ENCODE measurements at regions of chr10 and their contacts with region 1.

Region 1: DNA sequence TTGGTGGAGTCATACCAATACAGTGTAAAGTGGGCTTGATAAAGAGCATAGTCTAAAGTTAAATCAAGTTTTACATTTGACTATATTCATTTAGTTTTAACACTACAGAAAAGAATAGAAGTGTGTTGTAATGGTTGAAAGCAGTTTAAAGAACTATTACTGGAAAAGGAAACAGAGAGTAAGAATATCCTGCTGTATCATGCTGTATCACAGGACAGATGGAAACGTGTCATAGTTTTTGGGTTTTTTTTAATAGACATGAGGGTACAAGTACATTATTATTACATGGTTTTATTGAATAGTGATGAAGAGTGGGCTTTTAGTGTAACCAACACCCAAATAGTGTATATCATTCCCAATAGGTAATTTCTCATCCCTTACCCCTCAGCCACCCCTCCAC is 944.3 kb downstream of the LRMDA start:
- DNase-seq: no peak
- ATAC-seq: no peak
- H3K4me3 ChIP-seq: no peak overlapping the region
- H3K4me3 Mint-ChIP-seq: no peak overlapping the region
- H3K27ac ChIP-seq: no peak overlapping the region
- H3K27ac Mint-ChIP-seq: no peak overlapping the region
- H3K4me1 ChIP-seq: no peaks in the 10 kb centered on the region
- H3K4me1 Mint-ChIP-seq: no peaks in the 10 kb centered on the region
- H3K27me3 ChIP-seq: no peaks in the 10 kb centered on the region
- H3K27me3 Mint-ChIP-seq: no peaks in the 10 kb centered on the region
- CTCF ChIP-seq: no peak

Region 2: DNA sequence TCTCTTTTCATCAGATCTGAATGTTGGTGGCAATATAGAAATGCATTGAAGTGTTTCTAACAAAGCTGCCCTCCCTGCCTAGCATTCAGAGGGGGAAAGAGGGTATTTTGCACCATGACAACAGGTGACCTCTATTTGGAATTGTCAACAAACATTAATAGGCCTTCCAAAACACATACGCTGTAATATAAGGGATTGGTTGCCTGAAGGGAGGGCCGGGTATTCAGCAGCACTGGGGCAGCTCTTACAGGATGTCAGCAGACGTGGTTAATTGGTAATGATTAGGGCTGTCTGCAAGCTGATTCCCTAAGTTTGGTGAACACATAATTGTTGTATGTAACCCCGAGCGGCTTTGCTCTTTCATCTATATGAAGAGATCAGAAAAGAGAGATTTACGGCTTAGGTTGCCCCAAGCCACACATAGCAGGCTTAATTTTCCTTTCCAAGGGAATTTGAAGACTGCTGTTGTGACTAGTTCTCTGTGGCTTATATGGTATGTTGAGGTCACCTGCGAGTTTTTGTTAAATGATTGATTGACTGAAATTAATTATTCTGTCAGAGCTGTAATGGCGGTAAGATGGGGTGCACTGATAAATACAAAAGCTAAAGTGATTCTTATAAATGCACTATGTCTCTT is 185.0 kb before region 1 on chr10:
- CTCF ChIA-PET with region 1: no interaction called
- POLR2A ChIA-PET with region 1: no interaction called
- intact Hi-C with region 1: no loop called
- DNase-seq: no peak
- ATAC-seq: no peak
- H3K4me3 ChIP-seq: no peak overlapping the region
- H3K4me3 Mint-ChIP-seq: no peak overlapping the region
- H3K27ac ChIP-seq: no peak overlapping the region
- H3K27ac Mint-ChIP-seq: no peak overlapping the region
- H3K4me1 ChIP-seq: no peaks in the 10 kb centered on the region
- H3K4me1 Mint-ChIP-seq: no peaks in the 10 kb centered on the region
- H3K27me3 ChIP-seq: no peaks in the 10 kb centered on the region
- H3K27me3 Mint-ChIP-seq: no peaks in the 10 kb centered on the region
- CTCF ChIP-seq: no peak

Region 3: GRCh38 chr10:76416642-76417041 is 40.9 kb after region 1 on chr10:
- CTCF ChIA-PET with region 1: no interaction called
- POLR2A ChIA-PET with region 1: no interaction called
- intact Hi-C with region 1: loop called in 1 of 2 experiments (anchors 1 kb)
- DNase-seq: no peak
- ATAC-seq: no peak
- H3K4me3 ChIP-seq: no peak overlapping the region
- H3K4me3 Mint-ChIP-seq: no peak overlapping the region
- H3K27ac ChIP-seq: no peak overlapping the region
- H3K27ac Mint-ChIP-seq: no peak overlapping the region
- H3K4me1 ChIP-seq: no peaks in the 10 kb centered on the region
- H3K4me1 Mint-ChIP-seq: no peaks in the 10 kb centered on the region
- H3K27me3 ChIP-seq: no peaks in the 10 kb centered on the region
- H3K27me3 Mint-ChIP-seq: no peaks in the 10 kb centered on the region
- CTCF ChIP-seq: no peak

Measured in CD8-positive, alpha-beta T cell (primary cell).